CD4-positive, alpha-beta T cell (primary cell): ENCODE measurements at regions of chr1 and their contacts with region 1.

Region 1: GRCh38 chr1:27603681-27604578 is at the start of gene AHDC1:
- DNase-seq: peak; percentile 86 to 96 (median 90)
- ATAC-seq: peak; percentile 84
- H3K4me3 ChIP-seq: peak within 1 kb of the TSS; percentile 78
- H3K4me3 Mint-ChIP-seq: peak within 1 kb of the TSS; percentile 99
- H3K27ac ChIP-seq: peak within 1 kb of the TSS in 1 of 2 donors; percentile 67
- H3K27ac Mint-ChIP-seq: peak within 1 kb of the TSS; percentile 87
- H3K4me1 ChIP-seq: peaks cover 72% of the 10 kb centered on the region
- H3K4me1 Mint-ChIP-seq: peaks cover 54% of the 10 kb centered on the region
- H3K27me3 ChIP-seq: no peaks in the 10 kb centered on the region
- H3K27me3 Mint-ChIP-seq: no peaks in the 10 kb centered on the region
- CTCF ChIP-seq: no peak
- total RNA-seq, gene AHDC1: 20.8 to 22.9 TPM

Region 2: DNA sequence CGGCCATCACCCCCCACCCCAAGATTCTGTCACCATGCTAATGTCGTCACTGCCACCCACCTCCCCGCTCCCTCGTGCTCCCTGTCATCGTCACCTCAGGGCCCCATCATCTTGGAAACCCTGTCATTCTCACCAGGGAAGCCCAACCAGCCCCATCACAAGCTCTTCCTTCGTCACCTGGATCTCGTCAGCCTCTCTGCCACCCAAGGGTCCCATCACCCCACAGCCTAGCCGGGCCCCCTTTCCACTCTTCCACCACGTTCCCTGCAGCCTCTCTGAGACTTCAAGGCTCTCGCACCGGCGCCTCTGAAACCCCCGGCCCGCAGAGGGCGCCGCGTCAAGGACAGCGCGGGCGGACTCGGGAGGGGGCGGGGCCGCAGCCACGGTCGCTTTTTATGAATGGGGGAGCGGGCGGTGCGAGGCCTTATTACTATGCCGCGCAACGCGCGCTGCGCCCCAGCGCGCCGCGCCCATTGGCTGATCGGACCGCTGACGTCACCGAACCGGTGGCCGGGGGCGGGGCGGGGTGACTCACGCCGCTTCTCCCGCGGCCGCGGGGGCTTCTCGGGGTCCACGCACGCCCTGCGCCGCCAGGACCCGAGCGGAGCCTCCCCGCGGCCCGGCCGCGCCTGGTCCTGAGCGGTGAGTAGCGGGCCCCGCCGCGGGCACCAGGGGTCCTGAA is 211.7 kb before region 1 on chr1 and contains the start of gene GPR3:
- CTCF ChIA-PET with region 1: interaction called, 4 read pairs
- POLR2A ChIA-PET with region 1: no interaction called
- intact Hi-C with region 1: loop called (anchors 1 kb)
- DNase-seq: peak; percentile 88 to 97 (median 92)
- ATAC-seq: peak; percentile 89
- H3K4me3 ChIP-seq: peak within 1 kb of the TSS; percentile 45
- H3K4me3 Mint-ChIP-seq: peak within 1 kb of the TSS; percentile 77
- H3K27ac ChIP-seq: no peak within 1 kb of the TSS
- H3K27ac Mint-ChIP-seq: peak within 1 kb of the TSS; percentile 57
- H3K4me1 ChIP-seq: peaks cover 36% of the 10 kb centered on the region
- H3K4me1 Mint-ChIP-seq: peaks cover 26% of the 10 kb centered on the region
- H3K27me3 ChIP-seq: no peaks in the 10 kb centered on the region
- H3K27me3 Mint-ChIP-seq: peaks cover 3% of the 10 kb centered on the region
- CTCF ChIP-seq: peak; percentile 71
- total RNA-seq, gene GPR3: 0.14 to 0.19 TPM

Region 3: GRCh38 chr1:27416387-27417111 is 187.4 kb before region 1 on chr1:
- CTCF ChIA-PET with region 1: interaction called, 5 read pairs
- POLR2A ChIA-PET with region 1: interaction called, 3 read pairs
- intact Hi-C with region 1: loop called (anchors 1 kb)
- DNase-seq: peak in 10 of 14 experiments; percentile 28 to 81 (median 49)
- ATAC-seq: peak; percentile 73
- H3K4me3 ChIP-seq: no peak overlapping the region
- H3K4me3 Mint-ChIP-seq: no peak overlapping the region
- H3K27ac ChIP-seq: no peak overlapping the region
- H3K27ac Mint-ChIP-seq: peak overlapping the region; percentile 54
- H3K4me1 ChIP-seq: peaks cover 18% of the 10 kb centered on the region
- H3K4me1 Mint-ChIP-seq: peaks cover 46% of the 10 kb centered on the region
- H3K27me3 ChIP-seq: no peaks in the 10 kb centered on the region
- H3K27me3 Mint-ChIP-seq: no peaks in the 10 kb centered on the region
- CTCF ChIP-seq: peak; percentile 60

Region 4: DNA sequence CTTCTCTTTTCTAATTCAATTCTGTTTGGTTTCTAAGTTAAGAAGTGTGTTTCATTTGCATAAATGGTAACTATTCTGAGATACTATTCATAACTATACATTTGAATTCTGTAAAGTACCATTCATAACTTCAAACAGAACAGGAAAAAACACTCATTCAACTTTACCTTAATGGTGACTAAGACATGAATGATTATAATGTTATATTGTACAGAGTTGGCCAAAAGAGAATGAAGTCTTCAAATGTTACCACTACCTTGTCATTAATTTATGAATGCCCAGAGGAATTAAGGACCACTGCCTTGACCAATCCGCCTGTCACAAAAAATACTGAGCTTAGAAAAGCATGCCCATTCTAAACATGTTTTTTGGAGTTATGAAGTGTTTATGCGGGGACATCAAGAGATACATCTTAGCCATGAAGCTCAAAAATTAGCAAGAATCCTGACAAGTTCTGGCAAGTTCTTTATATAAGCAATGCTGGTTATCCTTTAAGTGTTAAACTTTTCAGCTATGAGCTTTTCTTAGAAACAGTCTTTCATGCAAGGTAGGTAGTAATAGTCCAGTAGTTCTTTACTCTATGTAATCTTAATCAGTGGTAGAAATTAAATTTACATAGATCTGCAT is 121.8 kb before region 1 on chr1:
- CTCF ChIA-PET with region 1: no interaction called
- POLR2A ChIA-PET with region 1: no interaction called
- intact Hi-C with region 1: no loop called
- DNase-seq: no peak
- ATAC-seq: no peak
- H3K4me3 ChIP-seq: no peak overlapping the region
- H3K4me3 Mint-ChIP-seq: no peak overlapping the region
- H3K27ac ChIP-seq: no peak overlapping the region
- H3K27ac Mint-ChIP-seq: peak overlapping the region; percentile 19
- H3K4me1 ChIP-seq: peaks cover 34% of the 10 kb centered on the region
- H3K4me1 Mint-ChIP-seq: peaks cover 44% of the 10 kb centered on the region
- H3K27me3 ChIP-seq: no peaks in the 10 kb centered on the region
- H3K27me3 Mint-ChIP-seq: no peaks in the 10 kb centered on the region
- CTCF ChIP-seq: no peak

Region 5: GRCh38 chr1:27556781-27557595 is 46.9 kb before region 1 on chr1:
- CTCF ChIA-PET with region 1: interaction called, 16 read pairs
- POLR2A ChIA-PET with region 1: interaction called, 11 read pairs
- intact Hi-C with region 1: loop called (anchors 1 kb)
- DNase-seq: peak; percentile 60 to 86 (median 65)
- ATAC-seq: peak; percentile 90
- H3K4me3 ChIP-seq: no peak overlapping the region
- H3K4me3 Mint-ChIP-seq: peak overlapping the region; percentile 23
- H3K27ac ChIP-seq: no peak overlapping the region
- H3K27ac Mint-ChIP-seq: peak overlapping the region; percentile 50
- H3K4me1 ChIP-seq: peaks cover 28% of the 10 kb centered on the region
- H3K4me1 Mint-ChIP-seq: peaks cover 39% of the 10 kb centered on the region
- H3K27me3 ChIP-seq: no peaks in the 10 kb centered on the region
- H3K27me3 Mint-ChIP-seq: no peaks in the 10 kb centered on the region
- CTCF ChIP-seq: peak; percentile 94

Region 6: GRCh38 chr1:27643701-27644625 is 40.0 kb after region 1 on chr1:
- CTCF ChIA-PET with region 1: interaction called, 3 read pairs
- POLR2A ChIA-PET with region 1: no interaction called
- intact Hi-C with region 1: loop called in 1 of 2 experiments (anchors 1 kb)
- DNase-seq: peak; percentile 55 to 87 (median 68)
- ATAC-seq: peak; percentile 99
- H3K4me3 ChIP-seq: no peak overlapping the region
- H3K4me3 Mint-ChIP-seq: no peak overlapping the region
- H3K27ac ChIP-seq: no peak overlapping the region
- H3K27ac Mint-ChIP-seq: peak overlapping the region; percentile 7
- H3K4me1 ChIP-seq: peaks cover 22% of the 10 kb centered on the region
- H3K4me1 Mint-ChIP-seq: peaks cover 14% of the 10 kb centered on the region
- H3K27me3 ChIP-seq: no peaks in the 10 kb centered on the region
- H3K27me3 Mint-ChIP-seq: no peaks in the 10 kb centered on the region
- CTCF ChIP-seq: peak; percentile 83

Region 7: GRCh38 chr1:27713139-27713725 is 109.3 kb after region 1 on chr1:
- CTCF ChIA-PET with region 1: no interaction called
- POLR2A ChIA-PET with region 1: no interaction called
- intact Hi-C with region 1: no loop called
- DNase-seq: no peak
- ATAC-seq: no peak
- H3K4me3 ChIP-seq: no peak overlapping the region
- H3K4me3 Mint-ChIP-seq: no peak overlapping the region
- H3K27ac ChIP-seq: no peak overlapping the region
- H3K27ac Mint-ChIP-seq: no peak overlapping the region
- H3K4me1 ChIP-seq: no peaks in the 10 kb centered on the region
- H3K4me1 Mint-ChIP-seq: no peaks in the 10 kb centered on the region
- H3K27me3 ChIP-seq: peaks cover 0 to 2% of the 10 kb centered on the region in 2 experiments
- H3K27me3 Mint-ChIP-seq: peaks cover 19% of the 10 kb centered on the region
- CTCF ChIP-seq: no peak